H1 (cell line): ENCODE measurements at regions of chr2 and their contacts with region 1.

Region 1: GRCh38 chr2:199704358-199705238 is 146.4 kb downstream of the FTCDNL1 start:
- DNase-seq: peak in 1 of 2 experiments; percentile 59
- H3K4me3 ChIP-seq: no peak overlapping the region
- H3K27ac ChIP-seq: no peak overlapping the region
- H3K4me1 ChIP-seq: no peaks in the 10 kb centered on the region
- H3K27me3 ChIP-seq: no peaks in the 10 kb centered on the region
- CTCF ChIP-seq: peak; percentile 34 to 87 (median 85)
- EP300 ChIP-seq: no peak
- POLR2A ChIP-seq: no peak
- RAD21 ChIP-seq: peak; percentile 92 to 96

Region 2: DNA sequence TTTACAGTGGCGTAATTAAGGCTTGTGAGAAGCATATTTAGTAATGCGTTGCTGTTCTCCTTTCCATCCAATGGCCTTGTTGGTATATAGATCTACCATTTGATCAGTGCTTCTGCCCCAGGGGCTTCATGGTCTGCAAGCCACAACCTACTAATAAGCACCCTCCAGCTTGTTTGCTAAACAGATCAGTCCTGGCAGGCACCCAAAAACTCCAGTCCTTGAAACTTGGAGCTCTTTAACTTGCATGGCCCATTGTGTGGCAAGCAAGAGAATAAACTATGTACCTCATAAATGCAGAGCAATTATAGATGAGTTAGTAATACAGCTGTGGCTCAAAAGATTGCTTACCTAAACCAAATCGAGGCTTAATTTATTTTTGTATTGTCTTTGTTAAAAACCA is 12.1 kb before region 1 on chr2:
- CTCF ChIA-PET with region 1: interaction called, 36 read pairs
- POLR2A ChIA-PET with region 1: no interaction called
- DNase-seq: no peak
- H3K4me3 ChIP-seq: no peak overlapping the region
- H3K27ac ChIP-seq: no peak overlapping the region
- H3K4me1 ChIP-seq: peaks cover 0 to 2% (median 0%) of the 10 kb centered on the region in 4 experiments; a peak in 1 of 7 replicates
- H3K27me3 ChIP-seq: no peaks in the 10 kb centered on the region
- CTCF ChIP-seq: no peak
- EP300 ChIP-seq: no peak
- POLR2A ChIP-seq: no peak
- RAD21 ChIP-seq: no peak

Region 3: GRCh38 chr2:199727306-199727705 is 22.7 kb after region 1 on chr2:
- CTCF ChIA-PET with region 1: interaction called, 13 read pairs
- POLR2A ChIA-PET with region 1: no interaction called
- DNase-seq: no peak
- H3K4me3 ChIP-seq: no peak overlapping the region
- H3K27ac ChIP-seq: no peak overlapping the region
- H3K4me1 ChIP-seq: no peaks in the 10 kb centered on the region
- H3K27me3 ChIP-seq: no peaks in the 10 kb centered on the region
- CTCF ChIP-seq: no peak
- EP300 ChIP-seq: no peak
- POLR2A ChIP-seq: no peak
- RAD21 ChIP-seq: no peak

Region 4: DNA sequence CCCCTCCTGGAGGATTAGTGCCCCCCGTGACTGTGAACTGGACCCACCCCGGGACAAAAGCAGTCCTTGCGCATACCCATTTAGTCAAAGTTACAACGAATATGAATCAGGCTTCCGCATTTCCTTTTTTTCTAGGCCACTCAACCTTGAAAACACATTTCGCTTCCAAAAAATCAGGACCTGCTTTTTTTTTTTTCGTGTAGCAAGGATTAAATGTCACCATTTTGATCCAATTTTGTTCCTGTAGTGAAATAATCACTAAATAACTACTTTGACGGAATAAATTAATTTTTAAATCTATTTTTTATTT is 146.9 kb after region 1 on chr2:
- CTCF ChIA-PET with region 1: interaction called, 14 read pairs
- POLR2A ChIA-PET with region 1: no interaction called
- DNase-seq: no peak
- H3K4me3 ChIP-seq: peak overlapping the region in 3 of 4 experiments; percentile 56 to 81 (median 70); a peak in 5 of 8 replicates
- H3K27ac ChIP-seq: no peak overlapping the region
- H3K4me1 ChIP-seq: peaks cover 0 to 9% (median 3%) of the 10 kb centered on the region in 4 experiments; a peak in 3 of 7 replicates
- H3K27me3 ChIP-seq: peaks cover 0 to 2% (median under 1%) of the 10 kb centered on the region in 4 experiments; a peak in 2 of 7 replicates
- CTCF ChIP-seq: no peak
- EP300 ChIP-seq: no peak
- POLR2A ChIP-seq: no peak
- RAD21 ChIP-seq: no peak

Region 5: DNA sequence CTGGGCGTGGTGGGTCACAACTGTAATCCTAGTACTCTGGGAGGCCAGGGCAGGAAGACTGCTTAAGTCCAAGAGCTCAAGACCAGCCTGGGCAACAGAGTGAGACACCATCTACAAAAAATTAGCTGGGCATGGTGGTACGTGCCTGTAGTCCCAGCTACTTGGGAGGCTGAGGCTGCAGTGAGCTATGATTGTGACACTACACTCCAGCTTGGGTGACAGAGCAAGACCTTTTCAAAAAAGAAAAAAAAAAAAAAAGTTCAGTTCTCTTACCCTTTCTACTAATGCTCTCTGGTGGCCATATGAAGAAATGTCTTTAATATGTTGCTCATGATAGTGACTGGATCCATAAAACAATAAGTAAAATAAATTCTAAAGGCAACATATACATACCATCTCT is 235.8 kb after region 1 on chr2:
- CTCF ChIA-PET with region 1: interaction called, 42 read pairs
- POLR2A ChIA-PET with region 1: interaction called, 4 read pairs
- DNase-seq: no peak
- H3K4me3 ChIP-seq: no peak overlapping the region
- H3K27ac ChIP-seq: no peak overlapping the region
- H3K4me1 ChIP-seq: no peaks in the 10 kb centered on the region
- H3K27me3 ChIP-seq: no peaks in the 10 kb centered on the region
- CTCF ChIP-seq: peak in 2 of 3 experiments; percentile 21 to 29; a peak in 2 of 4 replicates
- EP300 ChIP-seq: no peak
- POLR2A ChIP-seq: no peak
- RAD21 ChIP-seq: peak in 1 of 2 experiments; percentile 50